A673 (cell line): ENCODE measurements at regions of chr17 and their contacts with region 1.

Region 1: GRCh38 chr17:66255112-66255511 is 25.9 kb upstream of the APOH start:
- DNase-seq: peak; percentile 85
- H3K4me3 ChIP-seq: no peak overlapping the region
- H3K27ac ChIP-seq: no peak overlapping the region
- H3K4me1 ChIP-seq: peaks cover 10% of the 10 kb centered on the region
- H3K27me3 ChIP-seq: no peaks in the 10 kb centered on the region
- CTCF ChIP-seq: peak; percentile 85

Region 2: GRCh38 chr17:66220079-66220835 is 34.9 kb before region 1 on chr17:
- CTCF ChIA-PET with region 1: no interaction called
- POLR2A ChIA-PET with region 1: interaction called, 14 read pairs
- intact Hi-C with region 1: no loop called
- DNase-seq: no peak
- H3K4me3 ChIP-seq: no peak overlapping the region
- H3K27ac ChIP-seq: peak overlapping the region; percentile 37
- H3K4me1 ChIP-seq: peaks cover 17% of the 10 kb centered on the region
- H3K27me3 ChIP-seq: no peaks in the 10 kb centered on the region
- CTCF ChIP-seq: no peak

Region 3: GRCh38 chr17:66431910-66432683 is 177.0 kb after region 1 on chr17:
- CTCF ChIA-PET with region 1: no interaction called
- POLR2A ChIA-PET with region 1: no interaction called
- intact Hi-C with region 1: loop called (anchors 5 kb)
- DNase-seq: no peak
- H3K4me3 ChIP-seq: no peak overlapping the region
- H3K27ac ChIP-seq: no peak overlapping the region
- H3K4me1 ChIP-seq: peaks cover 8% of the 10 kb centered on the region
- H3K27me3 ChIP-seq: no peaks in the 10 kb centered on the region
- CTCF ChIP-seq: no peak

Region 4: GRCh38 chr17:66466840-66467367 is 211.8 kb after region 1 on chr17:
- CTCF ChIA-PET with region 1: no interaction called
- POLR2A ChIA-PET with region 1: interaction called, 11 read pairs
- intact Hi-C with region 1: no loop called
- DNase-seq: peak; percentile 89
- H3K4me3 ChIP-seq: no peak overlapping the region
- H3K27ac ChIP-seq: peak overlapping the region; percentile 44
- H3K4me1 ChIP-seq: peaks cover 27% of the 10 kb centered on the region
- H3K27me3 ChIP-seq: no peaks in the 10 kb centered on the region
- CTCF ChIP-seq: no peak

Region 5: GRCh38 chr17:66567234-66568170 is 312.4 kb after region 1 on chr17:
- CTCF ChIA-PET with region 1: no interaction called
- POLR2A ChIA-PET with region 1: no interaction called
- intact Hi-C with region 1: loop called (anchors 1 kb)
- DNase-seq: peak; percentile 76
- H3K4me3 ChIP-seq: no peak overlapping the region
- H3K27ac ChIP-seq: no peak overlapping the region
- H3K4me1 ChIP-seq: peaks cover 26% of the 10 kb centered on the region
- H3K27me3 ChIP-seq: no peaks in the 10 kb centered on the region
- CTCF ChIP-seq: peak; percentile 82

Region 6: GRCh38 chr17:66625311-66625775 is 370.2 kb after region 1 on chr17:
- CTCF ChIA-PET with region 1: no interaction called
- POLR2A ChIA-PET with region 1: no interaction called
- intact Hi-C with region 1: loop called (anchors 1 kb)
- DNase-seq: peak; percentile 70
- H3K4me3 ChIP-seq: no peak overlapping the region
- H3K27ac ChIP-seq: no peak overlapping the region
- H3K4me1 ChIP-seq: peaks cover 4% of the 10 kb centered on the region
- H3K27me3 ChIP-seq: no peaks in the 10 kb centered on the region
- CTCF ChIP-seq: peak; percentile 70

Region 7: DNA sequence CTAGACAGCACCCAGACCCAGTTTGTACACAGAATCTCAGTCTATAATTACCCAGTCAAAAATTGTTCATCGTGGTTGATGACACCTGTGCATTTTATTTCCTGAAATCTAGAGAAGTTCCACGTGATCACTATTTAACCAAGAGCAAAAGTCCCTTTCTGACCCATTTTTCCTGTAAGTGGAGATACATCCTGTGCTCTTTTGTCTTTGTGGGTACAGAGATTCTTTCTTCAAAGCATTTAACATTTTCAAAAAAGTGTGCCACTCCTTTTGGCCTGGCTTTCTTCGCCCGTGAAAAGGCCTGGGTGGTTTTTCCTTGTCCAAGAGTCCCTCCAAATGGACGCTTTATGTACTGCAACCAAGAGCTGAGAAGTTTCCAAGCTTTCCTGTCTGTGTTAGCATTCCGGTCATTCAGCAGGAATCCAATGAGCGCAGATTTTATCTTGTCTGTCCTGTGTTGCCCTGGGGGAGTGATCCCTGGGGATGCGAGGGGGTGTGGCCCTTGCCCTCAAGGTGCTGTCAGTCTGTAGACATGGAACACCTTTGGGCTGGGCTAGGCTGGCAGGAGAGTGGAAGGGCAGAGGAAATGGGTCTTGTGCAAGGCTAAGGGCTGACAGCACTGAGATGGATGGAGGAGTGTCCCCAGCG is 418.7 kb after region 1 on chr17:
- CTCF ChIA-PET with region 1: interaction called, 4 read pairs
- POLR2A ChIA-PET with region 1: no interaction called
- intact Hi-C with region 1: loop called (anchors 1 kb)
- DNase-seq: peak; percentile 78
- H3K4me3 ChIP-seq: no peak overlapping the region
- H3K27ac ChIP-seq: no peak overlapping the region
- H3K4me1 ChIP-seq: peaks cover 5% of the 10 kb centered on the region
- H3K27me3 ChIP-seq: no peaks in the 10 kb centered on the region
- CTCF ChIP-seq: peak; percentile 82